A673 (cell line): ENCODE measurements at regions of chr9 and their contacts with region 1.

Region 1: GRCh38 chr9:89000973-89001916 is 10.0 kb downstream of the S1PR3 start:
- DNase-seq: peak; percentile 95
- H3K4me3 ChIP-seq: no peak overlapping the region
- H3K27ac ChIP-seq: no peak overlapping the region
- H3K4me1 ChIP-seq: peaks cover 23% of the 10 kb centered on the region
- H3K27me3 ChIP-seq: no peaks in the 10 kb centered on the region
- CTCF ChIP-seq: peak; percentile 93

Region 2: GRCh38 chr9:87950765-87951488 is 1050.3 kb before region 1 on chr9:
- CTCF ChIA-PET with region 1: no interaction called
- POLR2A ChIA-PET with region 1: no interaction called
- intact Hi-C with region 1: loop called (anchors 5 kb)
- DNase-seq: peak; percentile 63
- H3K4me3 ChIP-seq: no peak overlapping the region
- H3K27ac ChIP-seq: no peak overlapping the region
- H3K4me1 ChIP-seq: no peaks in the 10 kb centered on the region
- H3K27me3 ChIP-seq: no peaks in the 10 kb centered on the region
- CTCF ChIP-seq: peak; percentile 68

Region 3: DNA sequence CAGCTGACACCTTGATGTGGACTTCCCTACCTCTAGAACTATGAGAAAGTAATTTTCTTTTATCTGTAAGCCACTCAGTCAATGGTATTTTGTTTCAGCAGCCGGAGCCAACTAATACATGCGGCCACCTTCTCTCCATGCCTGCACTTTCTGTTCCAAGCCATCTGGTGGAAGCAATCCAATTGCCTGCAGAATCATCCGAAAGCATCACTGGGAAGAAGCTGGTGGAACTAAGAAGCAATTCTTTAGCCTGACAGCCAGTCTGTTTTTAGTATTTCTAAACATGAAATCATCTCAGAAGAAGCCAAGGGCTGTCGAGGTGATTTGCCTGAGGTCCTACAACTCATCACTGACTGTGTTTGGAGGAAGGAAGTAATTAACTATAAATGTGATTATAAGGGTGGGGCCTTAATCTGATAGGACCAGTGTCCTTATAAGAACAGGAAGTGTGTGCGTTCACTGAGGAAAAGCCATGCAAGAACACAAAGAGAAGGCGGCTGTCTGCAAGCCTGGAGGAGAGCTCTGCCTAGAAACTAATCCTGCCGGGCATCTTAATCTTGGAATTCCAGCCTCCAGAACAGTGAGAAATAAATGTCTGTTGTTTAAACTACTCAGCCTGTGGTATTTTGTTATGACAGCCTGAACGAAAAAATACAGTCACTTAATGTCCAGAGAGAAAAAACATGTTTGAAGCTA is 417.2 kb before region 1 on chr9:
- CTCF ChIA-PET with region 1: no interaction called
- POLR2A ChIA-PET with region 1: no interaction called
- intact Hi-C with region 1: loop called (anchors 2 kb)
- DNase-seq: peak; percentile 98
- H3K4me3 ChIP-seq: no peak overlapping the region
- H3K27ac ChIP-seq: peak overlapping the region; percentile 91
- H3K4me1 ChIP-seq: peaks cover 15% of the 10 kb centered on the region
- H3K27me3 ChIP-seq: no peaks in the 10 kb centered on the region
- CTCF ChIP-seq: peak; percentile 32; the same call in 1 of the 2 replicates

Region 4: GRCh38 chr9:88660611-88661010 is 340.6 kb before region 1 on chr9:
- CTCF ChIA-PET with region 1: interaction called, 8 read pairs
- POLR2A ChIA-PET with region 1: no interaction called
- intact Hi-C with region 1: loop called (anchors 2 kb)
- DNase-seq: peak; percentile 75
- H3K4me3 ChIP-seq: no peak overlapping the region
- H3K27ac ChIP-seq: no peak overlapping the region
- H3K4me1 ChIP-seq: peaks cover 14% of the 10 kb centered on the region
- H3K27me3 ChIP-seq: no peaks in the 10 kb centered on the region
- CTCF ChIP-seq: peak; percentile 73

Region 5: DNA sequence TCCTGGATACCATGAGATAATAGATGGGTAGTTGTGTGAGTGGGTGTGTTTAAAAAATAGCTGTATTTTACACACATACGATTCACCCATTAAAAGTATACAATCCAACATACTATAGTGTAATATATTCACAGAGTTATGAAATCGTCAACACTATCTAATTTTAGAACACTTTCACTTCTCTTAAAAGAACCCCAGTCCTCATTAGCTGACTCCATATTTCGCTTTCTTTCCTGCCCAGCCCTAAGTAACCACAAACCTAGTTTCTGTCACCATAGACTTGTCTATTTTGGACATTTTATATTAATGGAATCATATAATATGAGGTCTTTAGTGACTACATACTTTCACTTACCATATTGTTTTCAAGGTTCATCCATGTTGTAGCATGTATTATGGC is 73.7 kb before region 1 on chr9:
- CTCF ChIA-PET with region 1: no interaction called
- POLR2A ChIA-PET with region 1: no interaction called
- intact Hi-C with region 1: no loop called
- DNase-seq: no peak
- H3K4me3 ChIP-seq: no peak overlapping the region
- H3K27ac ChIP-seq: no peak overlapping the region
- H3K4me1 ChIP-seq: no peaks in the 10 kb centered on the region
- H3K27me3 ChIP-seq: no peaks in the 10 kb centered on the region
- CTCF ChIP-seq: no peak

Region 6: DNA sequence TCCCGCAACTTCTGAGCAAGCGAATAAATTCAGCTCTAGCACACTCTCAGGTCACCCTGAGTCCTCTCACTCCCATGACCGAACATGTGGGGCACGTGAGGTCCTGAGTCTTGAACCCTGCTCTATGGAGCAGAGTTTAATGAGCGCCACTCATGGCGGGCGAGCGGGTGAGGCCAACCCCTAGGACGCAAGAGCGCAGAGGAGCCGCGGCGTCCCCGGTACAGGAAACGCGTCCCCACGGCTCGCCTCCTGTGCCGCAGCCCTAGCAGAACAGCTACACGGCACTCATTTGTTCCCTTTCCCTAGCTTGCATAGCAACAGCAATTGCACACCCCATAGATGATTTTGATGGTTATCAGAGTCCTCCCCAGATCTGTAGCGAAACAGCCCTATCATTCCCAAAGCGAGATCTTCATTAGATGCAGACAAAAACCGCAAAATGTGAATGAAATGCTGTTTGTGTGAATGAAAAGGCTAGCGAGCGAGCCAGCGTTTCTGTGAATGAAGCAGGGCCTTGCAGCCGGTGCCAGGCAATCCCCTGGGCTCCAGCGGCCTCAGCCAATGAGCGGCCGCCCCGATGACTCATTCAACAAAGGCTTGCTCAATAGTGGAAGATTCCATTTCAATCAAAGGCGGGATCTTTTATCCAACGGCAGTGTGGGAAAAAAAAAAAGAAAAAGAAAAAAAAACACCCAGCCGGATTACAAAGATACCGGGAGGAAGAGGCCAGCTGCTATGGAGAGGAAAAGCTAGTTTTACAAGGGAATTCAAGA is 178.8 kb after region 1 on chr9:
- CTCF ChIA-PET with region 1: no interaction called
- POLR2A ChIA-PET with region 1: no interaction called
- intact Hi-C with region 1: loop called (anchors 10 kb)
- DNase-seq: peak; percentile 97
- H3K4me3 ChIP-seq: peak overlapping the region; percentile 54
- H3K27ac ChIP-seq: peak overlapping the region; percentile 83
- H3K4me1 ChIP-seq: peaks cover 27% of the 10 kb centered on the region
- H3K27me3 ChIP-seq: peaks cover 5% of the 10 kb centered on the region
- CTCF ChIP-seq: no peak